Colonic mucosa (tissue), 4 donors: ENCODE measurements at regions of chr17 and their contacts with region 1.

Region 1: DNA sequence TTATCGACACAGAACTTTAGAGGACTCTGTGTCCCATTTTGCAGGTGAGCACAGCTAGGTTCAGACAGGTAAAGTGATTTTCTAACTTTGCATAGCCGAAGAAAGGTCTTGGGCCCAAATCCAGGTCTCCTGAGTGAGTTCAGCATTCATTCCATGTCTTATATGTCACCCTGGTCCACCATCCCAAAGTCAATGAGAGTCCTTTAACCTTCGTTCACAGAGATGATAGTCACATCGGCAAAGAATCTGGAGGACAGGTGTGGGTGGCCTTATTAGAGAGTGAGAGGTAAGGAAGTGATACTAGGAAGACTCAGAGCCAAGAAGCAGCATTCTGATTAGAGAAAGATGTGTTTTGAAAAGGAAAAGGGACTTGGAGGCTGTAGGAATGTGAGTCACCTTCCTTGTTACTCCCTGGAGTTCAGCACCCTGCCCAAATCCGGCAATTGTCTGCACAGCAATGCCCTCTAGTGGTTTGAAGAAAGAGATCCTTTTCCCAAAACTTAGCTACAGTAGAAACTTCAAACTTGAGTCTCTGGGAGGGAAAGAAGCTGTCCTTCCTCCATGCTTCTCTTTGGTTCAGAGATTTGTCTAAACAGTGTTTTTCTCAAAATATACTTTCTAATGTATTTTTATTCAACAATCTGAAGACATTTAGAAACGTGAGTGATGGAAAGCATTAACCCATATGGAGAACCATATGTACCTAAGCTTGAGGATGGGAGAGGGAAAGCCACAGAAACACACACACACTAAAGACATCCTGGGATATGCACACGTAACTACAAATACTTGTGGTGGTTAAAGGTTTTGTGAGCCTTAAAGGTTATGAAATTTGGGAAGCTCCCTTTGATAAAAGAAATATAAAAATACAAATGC is 96.4 kb upstream of the SHISA6 start:
- DNase-seq: peak; percentile 63
- H3K4me3 ChIP-seq: no peak overlapping the region
- H3K27ac ChIP-seq: no peak overlapping the region
- H3K4me1 ChIP-seq: no peaks in the 10 kb centered on the region
- H3K27me3 ChIP-seq: no peaks in the 10 kb centered on the region
- CTCF ChIP-seq: peak; percentile 68

Region 2: GRCh38 chr17:10743316-10744009 is 401.1 kb before region 1 on chr17:
- intact Hi-C with region 1: loop called (anchors 10 kb)
- DNase-seq: no peak
- H3K4me3 ChIP-seq: no peak overlapping the region
- H3K27ac ChIP-seq: no peak overlapping the region
- H3K4me1 ChIP-seq: no peaks in the 10 kb centered on the region
- H3K27me3 ChIP-seq: no peaks in the 10 kb centered on the region
- CTCF ChIP-seq: no peak

Region 3: DNA sequence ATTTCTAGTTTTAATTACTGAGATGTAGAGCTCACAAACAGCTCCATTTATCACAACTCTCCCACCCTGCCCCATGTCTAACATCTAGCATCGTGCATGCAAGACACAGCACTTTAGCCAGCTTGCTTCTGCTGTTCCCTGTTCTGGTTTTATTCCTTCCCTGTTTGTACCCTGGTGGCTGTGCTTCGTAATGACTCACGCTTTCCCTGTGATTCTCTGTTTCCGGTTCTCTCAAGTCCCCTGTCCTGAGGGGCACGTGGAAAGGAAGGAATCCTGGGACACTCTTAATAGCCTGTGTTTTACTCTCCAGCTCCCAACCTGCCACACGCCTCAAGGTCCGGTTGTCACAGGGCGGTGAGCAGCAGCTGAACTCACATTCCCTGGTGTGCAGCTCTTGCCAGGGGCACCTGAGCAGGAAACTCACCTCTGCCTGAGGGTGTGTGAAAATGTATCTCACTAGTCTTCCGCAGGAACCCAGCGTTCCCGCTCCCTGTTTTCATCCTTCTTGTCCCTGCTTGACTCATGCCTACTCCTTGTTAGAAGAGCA is 107.0 kb after region 1 on chr17:
- intact Hi-C with region 1: no loop called
- DNase-seq: no peak
- H3K4me3 ChIP-seq: no peak overlapping the region
- H3K27ac ChIP-seq: no peak overlapping the region
- H3K4me1 ChIP-seq: no peaks in the 10 kb centered on the region
- H3K27me3 ChIP-seq: no peaks in the 10 kb centered on the region
- CTCF ChIP-seq: no peak